B cell (primary cell): ENCODE measurements at regions of chr16 and their contacts with region 1.

Region 1: GRCh38 chr16:67521095-67521804 is 7.4 kb upstream of the RIPOR1 start:
- DNase-seq: peak; percentile 99
- ATAC-seq: peak; percentile 71
- H3K4me3 ChIP-seq: peak overlapping the region; percentile 47 to 74 (median 61)
- H3K4me3 Mint-ChIP-seq: peak overlapping the region; percentile 94
- H3K27ac ChIP-seq: peak overlapping the region; percentile 96 to 97
- H3K27ac Mint-ChIP-seq: peak overlapping the region; percentile 99
- H3K4me1 ChIP-seq: peaks cover 44 to 69% of the 10 kb centered on the region in 2 donors
- H3K4me1 Mint-ChIP-seq: peaks cover 77% of the 10 kb centered on the region
- H3K27me3 ChIP-seq: no peaks in the 10 kb centered on the region
- H3K27me3 Mint-ChIP-seq: no peaks in the 10 kb centered on the region
- CTCF ChIP-seq: peak; percentile 87

Region 2: GRCh38 chr16:67499106-67499505 is 22.1 kb before region 1 on chr16:
- CTCF ChIA-PET with region 1: interaction called, 817 read pairs
- POLR2A ChIA-PET with region 1: interaction called, 4 read pairs
- intact Hi-C with region 1: loop called (anchors 1 kb)
- DNase-seq: no peak
- ATAC-seq: no peak
- H3K4me3 ChIP-seq: no peak overlapping the region
- H3K4me3 Mint-ChIP-seq: no peak overlapping the region
- H3K27ac ChIP-seq: no peak overlapping the region
- H3K27ac Mint-ChIP-seq: peak overlapping the region; percentile 70
- H3K4me1 ChIP-seq: peaks cover 13 to 17% of the 10 kb centered on the region in 2 donors
- H3K4me1 Mint-ChIP-seq: peaks cover 29% of the 10 kb centered on the region
- H3K27me3 ChIP-seq: no peaks in the 10 kb centered on the region
- H3K27me3 Mint-ChIP-seq: no peaks in the 10 kb centered on the region
- CTCF ChIP-seq: no peak

Region 3: DNA sequence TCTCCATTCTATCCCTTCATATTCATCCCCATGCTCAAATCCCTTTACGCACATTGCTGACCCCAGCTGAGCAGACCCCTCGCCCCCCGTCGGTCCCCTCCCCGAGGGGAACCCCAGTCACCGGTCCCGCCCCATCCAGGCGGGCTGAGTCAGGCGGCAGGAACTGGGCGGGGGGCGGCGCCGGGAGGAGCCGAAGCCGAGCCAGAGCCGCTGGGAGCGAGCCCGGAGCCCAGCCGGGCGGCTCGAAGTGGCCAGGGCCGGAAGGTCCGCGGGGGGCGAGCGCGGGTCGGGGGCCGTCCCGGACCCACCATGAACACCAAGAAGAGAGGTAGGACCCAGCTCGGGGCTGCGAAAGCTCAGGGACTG is 16.0 kb after region 1 on chr16:
- CTCF ChIA-PET with region 1: interaction called, 97 read pairs
- POLR2A ChIA-PET with region 1: interaction called, 76 read pairs
- intact Hi-C with region 1: loop called (anchors 2 kb)
- DNase-seq: peak; percentile 71
- ATAC-seq: peak; percentile 44
- H3K4me3 ChIP-seq: peak overlapping the region; percentile 4 to 78 (median 69)
- H3K4me3 Mint-ChIP-seq: peak overlapping the region; percentile 91
- H3K27ac ChIP-seq: peak overlapping the region; percentile 91 to 97
- H3K27ac Mint-ChIP-seq: peak overlapping the region; percentile 95
- H3K4me1 ChIP-seq: peaks cover 63 to 79% of the 10 kb centered on the region in 2 donors
- H3K4me1 Mint-ChIP-seq: peaks cover 76% of the 10 kb centered on the region
- H3K27me3 ChIP-seq: no peaks in the 10 kb centered on the region
- H3K27me3 Mint-ChIP-seq: no peaks in the 10 kb centered on the region
- CTCF ChIP-seq: no peak

Region 4: GRCh38 chr16:67641779-67642708 is 120.8 kb after region 1 on chr16:
- CTCF ChIA-PET with region 1: interaction called, 80 read pairs
- POLR2A ChIA-PET with region 1: interaction called, 14 read pairs
- intact Hi-C with region 1: loop called (anchors 1 kb)
- DNase-seq: no peak
- ATAC-seq: no peak
- H3K4me3 ChIP-seq: no peak overlapping the region
- H3K4me3 Mint-ChIP-seq: no peak overlapping the region
- H3K27ac ChIP-seq: no peak overlapping the region
- H3K27ac Mint-ChIP-seq: no peak overlapping the region
- H3K4me1 ChIP-seq: peaks cover 12 to 20% of the 10 kb centered on the region in 2 donors
- H3K4me1 Mint-ChIP-seq: peaks cover 16% of the 10 kb centered on the region
- H3K27me3 ChIP-seq: no peaks in the 10 kb centered on the region
- H3K27me3 Mint-ChIP-seq: no peaks in the 10 kb centered on the region
- CTCF ChIP-seq: no peak

Region 5: GRCh38 chr16:67667817-67668494 is 146.7 kb after region 1 on chr16:
- CTCF ChIA-PET with region 1: interaction called, 136 read pairs
- POLR2A ChIA-PET with region 1: interaction called, 16 read pairs
- intact Hi-C with region 1: loop called (anchors 1 kb)
- DNase-seq: peak; percentile 89
- ATAC-seq: peak; percentile 81
- H3K4me3 ChIP-seq: peak overlapping the region in 4 of 5 experiments; percentile 67 to 91 (median 80)
- H3K4me3 Mint-ChIP-seq: peak overlapping the region; percentile 91
- H3K27ac ChIP-seq: peak overlapping the region; percentile 77 to 86
- H3K27ac Mint-ChIP-seq: peak overlapping the region; percentile 84
- H3K4me1 ChIP-seq: peaks cover 36 to 49% of the 10 kb centered on the region in 2 donors
- H3K4me1 Mint-ChIP-seq: peaks cover 49% of the 10 kb centered on the region
- H3K27me3 ChIP-seq: no peaks in the 10 kb centered on the region
- H3K27me3 Mint-ChIP-seq: no peaks in the 10 kb centered on the region
- CTCF ChIP-seq: peak; percentile 75

Region 6: GRCh38 chr16:67806428-67807147 is 285.3 kb after region 1 on chr16 and contains the starts of genes RANBP10 and TSNAXIP1:
- CTCF ChIA-PET with region 1: interaction called, 3 read pairs
- POLR2A ChIA-PET with region 1: interaction called, 9 read pairs
- intact Hi-C with region 1: loop called (anchors 10 kb)
- DNase-seq: peak; percentile 98
- ATAC-seq: peak; percentile 89
- H3K4me3 ChIP-seq: peak within 1 kb of the TSS; percentile 89 to 99 (median 92)
- H3K4me3 Mint-ChIP-seq: peak within 1 kb of the TSS; percentile 97
- H3K27ac ChIP-seq: peak within 1 kb of the TSS; percentile 78 to 80
- H3K27ac Mint-ChIP-seq: peak within 1 kb of the TSS; percentile 94
- H3K4me1 ChIP-seq: peaks cover 40 to 51% of the 10 kb centered on the region in 2 donors
- H3K4me1 Mint-ChIP-seq: peaks cover 45% of the 10 kb centered on the region
- H3K27me3 ChIP-seq: no peaks in the 10 kb centered on the region
- H3K27me3 Mint-ChIP-seq: no peaks in the 10 kb centered on the region
- CTCF ChIP-seq: no peak
- total RNA-seq, gene RANBP10: 32.2 and 33.1 TPM in 2 replicates
- total RNA-seq, gene TSNAXIP1: 1.1 and 1.2 TPM in 2 replicates